PC-9 (cell line): ENCODE measurements at regions of chr19 and their contacts with region 1.

Region 1: GRCh38 chr19:17794731-17795536 is at the start of gene B3GNT3:
- DNase-seq: peak; percentile 85 to 91
- H3K4me3 ChIP-seq: peak within 1 kb of the TSS; percentile 83
- H3K27ac ChIP-seq: peak within 1 kb of the TSS; percentile 98
- H3K4me1 ChIP-seq: peaks cover 73% of the 10 kb centered on the region
- H3K27me3 ChIP-seq: no peaks in the 10 kb centered on the region
- CTCF ChIP-seq: no peak
- total RNA-seq, gene B3GNT3: 47.7 and 65.9 TPM in 2 replicates

Region 2: DNA sequence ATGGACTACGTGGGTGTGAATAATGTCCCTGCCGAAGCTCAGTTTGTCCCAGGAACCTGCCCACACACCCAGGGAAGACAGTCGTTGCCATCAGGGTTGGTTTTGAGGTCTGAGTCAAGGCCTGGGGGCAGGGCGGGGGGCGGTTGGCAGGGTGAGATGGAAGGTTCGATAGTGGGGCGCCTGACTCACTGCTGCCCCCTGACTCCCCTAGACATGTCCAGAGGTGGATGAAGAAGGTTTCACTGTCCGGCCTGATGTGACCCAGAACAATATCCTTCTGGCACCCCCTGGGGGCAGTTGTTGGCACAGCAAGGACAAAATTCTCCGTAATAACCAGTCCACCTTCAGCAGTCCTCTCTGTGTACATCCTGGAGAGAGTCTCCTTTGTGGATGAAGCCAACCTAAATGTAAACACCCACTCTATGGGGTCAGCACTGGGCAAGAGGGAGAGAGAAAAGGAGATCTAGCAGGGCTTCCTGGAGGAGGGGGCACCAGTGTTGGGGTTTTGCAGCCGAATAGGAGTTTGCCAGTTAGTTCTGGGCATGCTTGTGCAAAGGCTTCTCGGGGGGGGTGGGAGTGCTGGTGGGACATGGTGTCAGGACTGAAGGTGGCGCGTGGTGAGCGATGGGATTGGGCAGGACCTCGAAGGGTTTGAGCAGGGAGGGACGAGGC is 19.6 kb before region 1 on chr19:
- CTCF ChIA-PET with region 1: no interaction called
- POLR2A ChIA-PET with region 1: interaction called, 3 read pairs
- intact Hi-C with region 1: loop called (anchors 1 kb)
- DNase-seq: peak; percentile 57 to 70
- H3K4me3 ChIP-seq: no peak overlapping the region
- H3K27ac ChIP-seq: no peak overlapping the region
- H3K4me1 ChIP-seq: peaks cover 18% of the 10 kb centered on the region
- H3K27me3 ChIP-seq: no peaks in the 10 kb centered on the region
- CTCF ChIP-seq: peak; percentile 93

Region 3: DNA sequence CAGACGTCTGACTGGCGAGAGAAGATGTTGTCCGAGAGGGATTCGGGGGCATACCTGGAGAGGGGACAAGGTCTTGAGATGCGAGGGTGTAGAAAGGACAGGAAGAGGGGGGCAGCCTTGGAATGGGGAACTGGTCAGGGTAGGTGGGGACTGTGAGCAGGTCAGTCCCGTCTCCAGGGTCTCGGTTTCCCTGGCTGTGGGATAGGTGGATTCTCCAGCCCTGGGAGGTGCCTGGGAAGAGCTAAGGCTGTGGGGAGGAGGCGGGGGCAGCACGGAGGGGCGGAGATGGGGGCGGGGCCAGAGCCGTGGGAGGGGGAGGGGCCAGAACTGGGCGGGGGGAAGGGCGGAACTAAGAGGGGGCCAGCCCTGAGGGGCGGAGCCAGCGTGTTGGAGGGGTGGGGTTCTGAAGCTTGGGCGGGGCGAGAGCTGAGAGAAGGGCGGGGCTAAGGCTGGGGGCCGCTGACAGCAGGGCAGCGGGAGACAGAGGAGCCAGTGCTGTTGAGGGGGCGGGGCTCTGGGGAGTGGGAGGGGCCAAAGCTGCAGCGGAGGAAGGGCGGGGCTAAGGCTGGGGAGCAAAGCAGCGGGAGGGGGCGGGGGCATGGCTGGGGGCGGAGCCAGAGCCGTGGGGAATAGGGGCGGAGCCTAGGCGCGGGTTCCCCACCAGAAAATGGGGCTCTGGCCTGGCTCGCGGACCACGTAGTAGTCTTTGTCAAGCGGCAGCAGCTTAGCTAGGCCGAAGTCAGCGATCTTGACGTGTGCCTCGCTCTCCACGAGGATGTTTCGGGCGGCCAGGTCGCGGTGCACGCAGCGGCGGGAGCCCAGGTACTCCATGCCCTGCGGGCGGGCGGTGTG is 35.9 kb after region 1 on chr19:
- CTCF ChIA-PET with region 1: interaction called, 8 read pairs
- POLR2A ChIA-PET with region 1: interaction called, 19 read pairs
- intact Hi-C with region 1: loop called (anchors 2 kb)
- DNase-seq: peak; percentile 88 to 94
- H3K4me3 ChIP-seq: peak overlapping the region; percentile 67
- H3K27ac ChIP-seq: peak overlapping the region; percentile 62
- H3K4me1 ChIP-seq: peaks cover 8% of the 10 kb centered on the region
- H3K27me3 ChIP-seq: no peaks in the 10 kb centered on the region
- CTCF ChIP-seq: no peak